ENCODE measurements at regions of chr4 and their contacts with region 1.

Region 1: GRCh38 chr4:112938461-112939058 is 110.9 kb upstream of the ANK2 start:
- DNase-seq: peak; percentile 36
- ATAC-seq: peak; percentile 66
- H3K4me3 ChIP-seq: no peak overlapping the region
- H3K27ac ChIP-seq: no peak overlapping the region
- H3K4me1 ChIP-seq: no peaks in the 10 kb centered on the region
- H3K27me3 ChIP-seq: no peaks in the 10 kb centered on the region
- CTCF ChIP-seq: peak; percentile 65
- POLR2A ChIP-seq: no peak
- RAD21 ChIP-seq: peak; percentile 63

Region 2: DNA sequence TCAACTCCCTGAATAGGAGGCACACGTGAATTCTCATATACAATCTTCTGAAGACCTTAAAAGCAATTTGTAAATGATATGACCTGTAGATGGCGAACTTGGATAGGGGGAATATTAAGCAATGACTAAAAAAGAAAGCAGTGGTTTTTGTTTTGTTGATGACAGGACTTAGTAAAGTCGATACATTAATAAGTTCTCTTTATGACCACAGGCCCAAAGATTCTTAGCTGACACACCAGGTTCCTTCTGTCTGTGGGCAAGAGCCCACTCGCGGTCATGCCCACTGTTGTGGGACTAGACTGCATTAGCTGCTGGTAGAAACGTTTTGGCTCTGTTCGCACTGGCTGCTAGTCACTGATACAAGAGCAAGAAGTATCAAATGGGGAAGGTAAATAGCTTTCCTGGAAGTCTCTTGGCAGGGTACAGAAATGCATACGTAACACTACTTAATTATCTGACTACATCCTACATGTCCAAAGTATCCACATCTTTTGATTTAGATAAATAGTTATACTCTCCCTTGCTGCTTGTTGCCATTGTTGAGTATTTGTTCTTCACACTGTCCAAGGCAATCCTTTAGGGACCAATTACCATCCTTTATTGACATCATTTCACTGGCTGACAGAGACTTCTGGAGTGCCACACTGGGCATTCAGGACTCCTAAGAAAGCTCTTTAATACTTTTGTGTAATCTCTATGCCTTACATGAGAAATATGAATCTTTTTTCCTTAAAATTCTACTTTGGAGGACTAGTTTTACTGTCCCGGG is 610.4 kb before region 1 on chr4:
- CTCF ChIA-PET with region 1: no interaction called
- POLR2A ChIA-PET with region 1: no interaction called
- dilution Hi-C with region 1: no loop called
- in situ Hi-C with region 1: loop called (anchors 25 kb)
- intact Hi-C with region 1: loop called (anchors 10 kb)
- DNase-seq: peak; percentile 72
- ATAC-seq: peak; percentile 83
- H3K4me3 ChIP-seq: no peak overlapping the region
- H3K27ac ChIP-seq: no peak overlapping the region
- H3K4me1 ChIP-seq: no peaks in the 10 kb centered on the region
- H3K27me3 ChIP-seq: no peaks in the 10 kb centered on the region
- CTCF ChIP-seq: peak; percentile 74
- POLR2A ChIP-seq: no peak
- RAD21 ChIP-seq: peak; percentile 83

Region 3: DNA sequence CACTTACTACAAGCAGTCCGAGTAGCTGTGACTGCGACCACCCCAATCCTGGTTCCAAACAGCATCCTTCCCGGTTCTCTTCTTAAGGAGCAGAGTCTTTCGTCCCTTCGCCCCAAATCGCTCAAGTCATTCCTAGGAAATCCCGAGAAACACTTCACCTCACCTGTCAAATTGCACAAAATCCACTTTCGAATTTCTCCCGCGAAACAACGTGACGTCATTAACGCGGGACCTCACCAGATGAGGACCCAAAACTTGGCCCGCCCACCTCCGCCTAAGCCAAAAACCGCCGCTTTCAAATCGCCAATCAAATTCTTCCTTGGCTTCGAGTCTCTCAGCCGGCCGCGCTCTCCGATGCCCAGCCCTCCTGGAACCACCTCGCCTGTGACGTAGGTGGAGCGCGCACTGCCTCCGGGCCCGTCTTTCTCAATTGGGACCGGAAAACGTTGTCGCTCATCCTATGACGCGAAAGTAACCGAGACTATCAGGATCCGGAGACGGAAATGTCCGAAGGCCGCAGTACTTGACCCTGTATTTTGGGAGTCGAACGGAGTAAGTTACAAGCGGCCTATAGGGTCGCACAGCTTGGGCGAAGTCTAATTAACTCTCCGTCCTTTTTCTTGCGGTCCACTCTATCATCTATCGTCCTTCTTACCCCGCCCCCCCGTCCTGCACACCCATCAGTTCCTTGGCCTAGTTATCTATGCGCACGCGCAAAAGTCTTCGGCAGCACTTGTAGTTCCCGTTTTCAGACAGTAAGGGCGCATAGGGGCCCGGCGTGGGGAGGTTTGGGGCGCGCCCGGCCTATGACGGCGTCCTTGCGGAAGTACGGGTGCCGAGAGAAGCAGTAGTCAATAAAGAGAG is 301.6 kb before region 1 on chr4 and contains the starts of genes LARP7 and ZGRF1:
- CTCF ChIA-PET with region 1: no interaction called
- POLR2A ChIA-PET with region 1: no interaction called
- dilution Hi-C with region 1: no loop called
- in situ Hi-C with region 1: loop called (anchors 25 kb)
- intact Hi-C with region 1: loop called (anchors 1 kb)
- DNase-seq: peak; percentile 99
- ATAC-seq: peak; percentile 95
- H3K4me3 ChIP-seq: peak within 1 kb of the TSS; percentile 73
- H3K27ac ChIP-seq: peak within 1 kb of the TSS; percentile 94
- H3K4me1 ChIP-seq: 0 out of 2 replicates have a peak, but pooled peaks cover 2% of the 10 kb centered on the region
- H3K27me3 ChIP-seq: no peaks in the 10 kb centered on the region
- CTCF ChIP-seq: peak; percentile 96
- POLR2A ChIP-seq: peak; percentile 79; the same call in 1 of the 2 replicates
- RAD21 ChIP-seq: 0 out of 2 replicates have a peak, but pooled peaks have one; percentile 20
- total RNA-seq, gene LARP7: 5.9 and 16.7 TPM in 2 replicates
- total RNA-seq, gene ZGRF1: 5.6 and 10.0 TPM in 2 replicates

Region 4: DNA sequence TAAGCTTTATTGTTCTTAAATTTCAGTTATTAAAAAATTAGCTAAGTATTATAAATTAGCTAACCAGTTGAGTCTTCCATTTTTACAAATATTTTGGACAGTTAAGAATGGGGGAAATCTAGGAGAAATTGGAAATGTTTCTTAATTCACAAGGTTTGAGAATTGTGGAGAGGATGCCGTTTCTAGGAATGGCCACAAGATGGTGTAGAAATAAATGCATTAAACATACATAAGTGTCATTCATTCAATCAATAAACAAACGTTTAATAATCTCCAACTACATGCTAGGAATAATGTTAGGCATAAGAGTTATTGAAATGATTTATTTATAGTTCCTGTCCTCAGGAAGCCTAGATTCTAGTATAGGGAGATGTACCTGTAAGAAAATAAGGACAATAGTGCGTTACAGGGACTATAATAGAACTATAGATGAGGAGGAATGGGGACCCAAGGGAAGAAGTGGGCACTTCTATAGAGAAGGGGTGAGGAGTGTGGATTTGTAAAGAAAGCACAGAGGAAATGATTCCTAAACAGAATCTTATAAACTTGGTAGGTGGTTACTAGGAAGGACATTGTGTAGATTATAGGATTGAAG is 84.8 kb before region 1 on chr4:
- CTCF ChIA-PET with region 1: no interaction called
- POLR2A ChIA-PET with region 1: no interaction called
- dilution Hi-C with region 1: no loop called
- in situ Hi-C with region 1: no loop called
- intact Hi-C with region 1: loop called (anchors 5 kb)
- DNase-seq: no peak
- ATAC-seq: no peak
- H3K4me3 ChIP-seq: no peak overlapping the region
- H3K27ac ChIP-seq: no peak overlapping the region
- H3K4me1 ChIP-seq: no peaks in the 10 kb centered on the region
- H3K27me3 ChIP-seq: no peaks in the 10 kb centered on the region
- CTCF ChIP-seq: peak; percentile 18; the same call in 1 of the 2 replicates
- POLR2A ChIP-seq: no peak
- RAD21 ChIP-seq: no peak

Region 5: DNA sequence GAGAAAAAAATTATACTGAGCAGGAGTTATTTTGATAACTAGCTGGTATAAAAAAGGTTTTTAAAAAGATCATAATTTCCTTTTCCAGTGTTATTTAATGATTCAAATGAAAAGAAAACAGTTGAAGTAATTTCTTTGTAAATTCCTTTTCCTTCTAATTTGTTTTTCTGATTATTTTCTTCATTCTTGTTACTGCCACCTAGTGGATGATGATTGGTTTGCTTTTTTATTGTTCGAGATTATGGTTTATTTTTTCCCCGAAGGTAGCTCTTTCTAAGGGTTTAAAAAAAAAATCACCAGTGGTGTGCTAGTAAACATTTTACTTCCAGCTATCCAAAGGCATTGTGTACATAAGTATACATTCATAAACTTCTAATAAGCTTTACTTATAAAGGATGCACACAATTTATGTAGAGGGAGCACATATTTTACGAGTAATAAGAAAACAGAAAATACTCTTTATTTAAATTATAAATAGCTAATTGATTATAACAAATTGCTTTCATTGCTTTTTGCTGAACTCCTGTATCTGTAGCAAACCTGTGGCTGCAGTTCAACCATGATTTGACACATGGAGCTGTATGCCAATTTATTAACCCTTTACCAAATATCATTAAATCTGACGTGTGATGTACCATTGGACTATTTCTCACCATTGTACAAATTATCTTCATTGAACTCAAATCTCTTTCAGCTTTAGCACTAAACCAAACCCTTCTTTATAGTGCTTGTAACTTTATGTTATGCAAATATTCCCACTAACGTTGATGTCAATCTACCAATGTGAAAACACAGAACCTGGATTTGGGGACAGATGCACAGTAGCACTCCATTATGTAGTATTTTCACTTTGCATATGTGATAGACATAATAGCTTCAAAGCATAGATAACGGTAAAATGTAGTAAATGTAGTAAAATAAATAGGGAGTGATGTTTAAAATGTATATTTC is 13.1 kb after region 1 on chr4:
- CTCF ChIA-PET with region 1: interaction called, 12 read pairs
- POLR2A ChIA-PET with region 1: no interaction called
- dilution Hi-C with region 1: no loop called
- in situ Hi-C with region 1: no loop called
- intact Hi-C with region 1: no loop called
- DNase-seq: peak; percentile 10
- ATAC-seq: no peak
- H3K4me3 ChIP-seq: no peak overlapping the region
- H3K27ac ChIP-seq: no peak overlapping the region
- H3K4me1 ChIP-seq: no peaks in the 10 kb centered on the region
- H3K27me3 ChIP-seq: no peaks in the 10 kb centered on the region
- CTCF ChIP-seq: peak; percentile 51
- POLR2A ChIP-seq: no peak
- RAD21 ChIP-seq: no peak

Region 6: GRCh38 chr4:113684534-113685091 is 746.1 kb after region 1 on chr4:
- CTCF ChIA-PET with region 1: no interaction called
- POLR2A ChIA-PET with region 1: no interaction called
- dilution Hi-C with region 1: no loop called
- in situ Hi-C with region 1: no loop called
- intact Hi-C with region 1: no loop called
- DNase-seq: peak; percentile 84
- ATAC-seq: peak; percentile 87
- H3K4me3 ChIP-seq: no peak overlapping the region
- H3K27ac ChIP-seq: peak overlapping the region; percentile 9; the same call in 1 of the 2 replicates
- H3K4me1 ChIP-seq: peaks cover 6% of the 10 kb centered on the region
- H3K27me3 ChIP-seq: no peaks in the 10 kb centered on the region
- CTCF ChIP-seq: peak; percentile 52
- POLR2A ChIP-seq: no peak
- RAD21 ChIP-seq: peak; percentile 60

Measured in IMR-90 (cell line).